ENCODE measurements at regions of chr1 and their contacts with region 1.

Region 1: DNA sequence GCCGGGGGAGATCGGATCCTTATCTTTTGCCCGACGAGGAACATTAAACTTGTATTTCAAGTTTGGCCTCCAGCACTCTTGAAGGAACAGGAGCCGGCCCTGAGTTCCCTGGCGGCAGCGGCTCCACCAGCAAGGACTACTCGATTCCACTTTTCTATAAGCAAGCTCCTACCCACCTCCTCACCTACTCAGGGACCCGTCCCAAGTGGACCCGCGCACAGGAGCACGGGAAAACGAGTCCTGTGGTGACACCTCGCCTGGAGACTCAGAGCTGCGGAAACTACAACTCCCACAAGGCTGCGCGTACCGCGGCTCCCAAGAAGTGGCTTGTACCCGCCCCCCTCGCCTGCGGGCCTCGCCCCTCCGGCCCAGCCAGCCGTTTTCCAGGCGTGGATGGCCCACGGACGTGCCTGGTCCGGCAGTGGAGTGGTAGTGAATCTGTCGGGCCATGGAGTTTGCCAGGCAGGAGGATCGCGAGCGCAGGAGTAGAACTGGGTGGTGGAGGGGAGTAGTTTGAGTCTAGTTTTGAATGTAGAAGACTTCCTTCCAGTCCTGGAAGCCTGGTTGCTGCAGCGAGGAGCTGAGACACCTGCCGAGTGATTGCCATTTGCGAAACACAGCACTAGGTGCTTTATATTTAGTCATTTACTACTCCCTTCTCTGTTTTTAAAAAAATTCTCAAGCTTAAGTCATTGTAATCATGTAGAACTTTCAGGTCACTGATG is at the start of gene ACP6:
- DNase-seq: peak; percentile 80 to 90 (median 84)
- H3K4me3 ChIP-seq: peak within 1 kb of the TSS; percentile 79 to 91
- H3K4me3 Mint-ChIP-seq: peak within 1 kb of the TSS; percentile 96 to 99 (median 97)
- H3K27ac ChIP-seq: peak within 1 kb of the TSS; percentile 70
- H3K27ac Mint-ChIP-seq: peak within 1 kb of the TSS; percentile 86 to 97 (median 93)
- H3K4me1 ChIP-seq: peaks cover 14% of the 10 kb centered on the region
- H3K4me1 Mint-ChIP-seq: peaks cover 17 to 34% (median 22%) of the 10 kb centered on the region in 4 donors
- H3K27me3 ChIP-seq: no peaks in the 10 kb centered on the region
- H3K27me3 Mint-ChIP-seq: peaks cover 0 to 4% of the 10 kb centered on the region in 2 donors
- total RNA-seq, gene ACP6: 22.0 to 22.7 TPM

Region 2: DNA sequence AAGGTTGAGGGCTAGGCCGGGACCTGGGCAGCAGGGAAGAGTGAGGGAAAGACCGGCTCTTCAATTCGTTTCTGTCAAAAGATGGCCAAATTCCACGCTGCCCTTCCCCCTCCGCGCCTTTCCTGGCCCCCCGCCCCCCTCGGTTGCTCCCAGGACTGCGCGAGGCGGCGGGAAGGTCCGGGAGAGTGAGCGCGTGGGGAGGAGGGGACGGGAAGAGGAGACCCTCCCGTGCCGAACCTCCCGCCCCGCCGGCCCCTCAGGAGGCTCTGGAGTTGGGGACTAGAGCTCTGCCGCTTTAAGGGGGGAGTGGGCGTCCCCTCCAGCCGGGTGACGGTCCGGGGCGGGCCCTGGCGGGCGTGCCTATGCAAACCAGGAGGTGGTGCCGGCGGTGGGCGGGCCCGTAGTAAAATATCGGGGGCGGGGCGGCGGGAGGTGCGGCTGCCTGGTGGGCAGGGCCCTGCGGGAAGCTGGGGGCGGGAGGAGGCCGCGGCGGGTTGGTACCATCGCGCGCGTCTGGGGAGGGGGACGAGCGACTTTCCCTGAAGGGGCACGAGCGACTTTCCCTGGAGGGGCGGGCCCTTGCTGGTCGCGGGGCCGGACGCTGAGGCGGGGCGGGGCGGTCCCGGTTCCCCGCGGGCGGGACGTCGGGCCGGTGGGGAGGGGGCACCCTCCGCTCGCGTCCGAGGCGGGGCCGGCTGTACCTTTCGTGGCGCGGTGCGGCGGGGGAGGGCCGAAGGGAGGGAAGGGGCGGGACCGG is 70.9 kb before region 1 on chr1:
- CTCF ChIA-PET with region 1: no interaction called
- POLR2A ChIA-PET with region 1: interaction called, 7 read pairs
- intact Hi-C with region 1: loop called (anchors 1 kb)
- DNase-seq: peak; percentile 94 to 96 (median 95)
- H3K4me3 ChIP-seq: peak overlapping the region; percentile 67 to 72
- H3K4me3 Mint-ChIP-seq: peak overlapping the region; percentile 86 to 92 (median 90)
- H3K27ac ChIP-seq: peak overlapping the region; percentile 47
- H3K27ac Mint-ChIP-seq: peak overlapping the region; percentile 48 to 91 (median 85)
- H3K4me1 ChIP-seq: peaks cover 24% of the 10 kb centered on the region
- H3K4me1 Mint-ChIP-seq: peaks cover 15 to 33% (median 25%) of the 10 kb centered on the region in 4 donors
- H3K27me3 ChIP-seq: no peaks in the 10 kb centered on the region
- H3K27me3 Mint-ChIP-seq: no peaks in the 10 kb centered on the region

Region 3: GRCh38 chr1:147647796-147648633 is 22.5 kb before region 1 on chr1:
- CTCF ChIA-PET with region 1: interaction called, 7 read pairs
- POLR2A ChIA-PET with region 1: interaction called, 18 read pairs
- intact Hi-C with region 1: no loop called
- DNase-seq: peak; percentile 50 to 70 (median 67)
- H3K4me3 ChIP-seq: peak overlapping the region in 1 of 2 donors; percentile 13
- H3K4me3 Mint-ChIP-seq: peak overlapping the region; percentile 54 to 87 (median 78)
- H3K27ac ChIP-seq: peak overlapping the region; percentile 36
- H3K27ac Mint-ChIP-seq: peak overlapping the region; percentile 70 to 94 (median 91)
- H3K4me1 ChIP-seq: peaks cover 46% of the 10 kb centered on the region
- H3K4me1 Mint-ChIP-seq: peaks cover 51 to 69% (median 58%) of the 10 kb centered on the region in 4 donors
- H3K27me3 ChIP-seq: no peaks in the 10 kb centered on the region
- H3K27me3 Mint-ChIP-seq: no peaks in the 10 kb centered on the region

Region 4: GRCh38 chr1:147700042-147701006 is 29.8 kb after region 1 on chr1:
- CTCF ChIA-PET with region 1: interaction called, 5 read pairs
- POLR2A ChIA-PET with region 1: no interaction called
- intact Hi-C with region 1: loop called (anchors 1 kb)
- DNase-seq: peak; percentile 63 to 70 (median 68)
- H3K4me3 ChIP-seq: no peak overlapping the region
- H3K4me3 Mint-ChIP-seq: peak overlapping the region in 7 of 8 donors; percentile 40 to 80 (median 70)
- H3K27ac ChIP-seq: peak overlapping the region; percentile 30
- H3K27ac Mint-ChIP-seq: peak overlapping the region; percentile 37 to 91 (median 73)
- H3K4me1 ChIP-seq: peaks cover 9% of the 10 kb centered on the region
- H3K4me1 Mint-ChIP-seq: peaks cover 12 to 21% (median 17%) of the 10 kb centered on the region in 4 donors
- H3K27me3 ChIP-seq: no peaks in the 10 kb centered on the region
- H3K27me3 Mint-ChIP-seq: peaks cover 5 to 9% of the 10 kb centered on the region in 2 donors

Measured in CD4-positive, alpha-beta memory T cell (primary cell).